ENCODE measurements at regions of chr22 and their contacts with region 1.

Region 1: GRCh38 chr22:50398831-50399648 is 55.9 kb downstream of the PPP6R2 start:
- DNase-seq: no peak
- H3K4me3 ChIP-seq: no peak overlapping the region
- H3K27ac ChIP-seq: peak overlapping the region; percentile 80
- H3K4me1 ChIP-seq: peaks cover 28% of the 10 kb centered on the region
- H3K27me3 ChIP-seq: no peaks in the 10 kb centered on the region
- CTCF ChIP-seq: no peak

Region 2: GRCh38 chr22:50417411-50418210 is 18.6 kb after region 1 on chr22:
- CTCF ChIA-PET with region 1: interaction called, 11 read pairs
- POLR2A ChIA-PET with region 1: no interaction called
- intact Hi-C with region 1: no loop called
- DNase-seq: no peak
- H3K4me3 ChIP-seq: no peak overlapping the region
- H3K27ac ChIP-seq: no peak overlapping the region
- H3K4me1 ChIP-seq: no peaks in the 10 kb centered on the region
- H3K27me3 ChIP-seq: no peaks in the 10 kb centered on the region
- CTCF ChIP-seq: no peak

Measured in A673 (cell line).